Dorsolateral prefrontal cortex (tissue), 120 donors: ENCODE measurements at regions of chr9 and their contacts with region 1.

Region 1: DNA sequence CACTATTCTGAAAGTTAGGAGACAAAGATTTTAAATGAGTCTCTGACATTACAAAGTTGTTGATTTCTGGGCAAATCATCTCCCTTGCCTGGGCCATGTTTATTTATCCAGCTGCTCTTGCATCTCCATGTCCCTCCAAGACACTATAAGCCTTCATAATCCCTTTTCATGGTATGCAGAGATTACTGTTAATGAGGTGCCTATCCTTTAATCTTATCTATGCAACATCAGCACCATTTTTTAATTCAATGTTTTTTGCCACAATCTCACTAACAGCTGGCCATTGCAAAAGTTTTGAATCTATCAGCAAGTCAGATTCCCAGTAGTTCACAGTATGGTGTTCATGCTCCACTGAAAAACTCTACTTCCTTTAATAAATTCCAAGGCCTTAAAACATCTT is 108.5 kb upstream of the PTPRD start:
- DNase-seq: no peak
- H3K4me3 ChIP-seq: no peak overlapping the region
- H3K27ac ChIP-seq: no peak overlapping the region
- H3K27me3 ChIP-seq: no peaks in the 10 kb centered on the region
- CTCF ChIP-seq: no peak

Region 2: GRCh38 chr9:10661376-10661775 is 59.9 kb before region 1 on chr9:
- intact Hi-C with region 1: loop called in 1 of 2 experiments (anchors 10 kb)
- DNase-seq: no peak
- H3K4me3 ChIP-seq: no peak overlapping the region
- H3K27ac ChIP-seq: no peak overlapping the region
- H3K27me3 ChIP-seq: no peaks in the 10 kb centered on the region
- CTCF ChIP-seq: no peak